Activated CD4-positive, alpha-beta memory T cell treated with anti-CD3 and anti-CD28 coated beads, Interleukin-2, amount 10 ng/mL, durations not matched to agents 7 days and 5 days (primary cell): ENCODE measurements at regions of chr4 and their contacts with region 1.

Region 1: DNA sequence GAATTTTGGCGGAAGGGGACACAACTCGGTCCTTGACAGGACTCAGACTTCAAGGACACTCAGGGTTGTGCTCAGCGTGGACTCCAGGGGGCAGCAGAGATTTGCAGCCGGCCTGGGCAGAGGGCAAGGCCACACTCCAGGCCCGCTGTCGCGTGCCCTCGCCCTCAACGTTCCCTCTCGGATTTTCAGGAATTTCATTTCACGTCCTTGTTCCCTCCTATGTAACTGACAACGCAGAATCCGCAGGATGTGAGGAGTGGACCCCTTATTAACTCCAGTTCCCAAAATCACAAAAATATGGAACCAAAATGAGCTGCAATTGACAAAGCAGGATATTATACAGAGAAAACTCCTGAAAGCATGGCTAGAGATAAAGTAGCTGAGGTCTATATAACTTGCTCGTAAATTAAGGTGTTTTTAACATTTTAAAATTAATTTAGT is 21.0 kb upstream of the DCTD start:
- DNase-seq: peak; percentile 67
- H3K4me3 Mint-ChIP-seq: no peak overlapping the region
- H3K27ac Mint-ChIP-seq: no peak overlapping the region
- H3K4me1 Mint-ChIP-seq: no peaks in the 10 kb centered on the region
- H3K27me3 Mint-ChIP-seq: peaks cover 10% of the 10 kb centered on the region

Region 2: DNA sequence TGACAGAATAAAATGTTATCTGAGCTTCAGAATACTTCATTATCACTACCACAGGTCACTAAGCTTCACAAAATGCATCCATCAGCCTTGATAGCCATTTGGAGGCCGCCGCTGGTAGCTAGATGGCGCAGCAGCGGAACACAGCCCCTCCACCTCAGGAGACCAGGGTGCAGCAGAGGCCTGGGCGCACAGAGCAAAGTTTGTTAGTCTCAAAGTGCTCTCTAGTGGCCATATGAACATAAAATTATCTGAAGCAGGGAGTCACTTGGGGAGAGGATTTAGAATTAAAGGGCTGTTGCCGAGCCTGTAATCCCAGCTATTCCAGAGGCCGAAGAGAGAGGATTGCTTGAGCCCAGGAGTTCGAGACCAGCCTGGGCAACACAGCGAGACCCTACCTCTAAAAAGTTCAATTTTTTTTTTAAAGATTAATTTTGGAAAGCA is 12.9 kb before region 1 on chr4:
- CTCF ChIA-PET with region 1: interaction called, 12 read pairs
- POLR2A ChIA-PET with region 1: no interaction called
- DNase-seq: peak; percentile 59
- H3K4me3 Mint-ChIP-seq: no peak overlapping the region
- H3K27ac Mint-ChIP-seq: no peak overlapping the region
- H3K4me1 Mint-ChIP-seq: no peaks in the 10 kb centered on the region
- H3K27me3 Mint-ChIP-seq: peaks cover 14% of the 10 kb centered on the region

Region 3: GRCh38 chr4:182960746-182961145 is 22.5 kb after region 1 on chr4:
- CTCF ChIA-PET with region 1: no interaction called
- POLR2A ChIA-PET with region 1: no interaction called
- DNase-seq: no peak
- H3K4me3 Mint-ChIP-seq: no peak overlapping the region
- H3K27ac Mint-ChIP-seq: no peak overlapping the region
- H3K4me1 Mint-ChIP-seq: no peaks in the 10 kb centered on the region
- H3K27me3 Mint-ChIP-seq: peaks cover 4% of the 10 kb centered on the region

Region 4: GRCh38 chr4:183074296-183074990 is 136.2 kb after region 1 on chr4:
- CTCF ChIA-PET with region 1: interaction called, 13 read pairs
- POLR2A ChIA-PET with region 1: no interaction called
- DNase-seq: no peak
- H3K4me3 Mint-ChIP-seq: no peak overlapping the region
- H3K27ac Mint-ChIP-seq: no peak overlapping the region
- H3K4me1 Mint-ChIP-seq: no peaks in the 10 kb centered on the region
- H3K27me3 Mint-ChIP-seq: peaks cover 15% of the 10 kb centered on the region

Region 5: DNA sequence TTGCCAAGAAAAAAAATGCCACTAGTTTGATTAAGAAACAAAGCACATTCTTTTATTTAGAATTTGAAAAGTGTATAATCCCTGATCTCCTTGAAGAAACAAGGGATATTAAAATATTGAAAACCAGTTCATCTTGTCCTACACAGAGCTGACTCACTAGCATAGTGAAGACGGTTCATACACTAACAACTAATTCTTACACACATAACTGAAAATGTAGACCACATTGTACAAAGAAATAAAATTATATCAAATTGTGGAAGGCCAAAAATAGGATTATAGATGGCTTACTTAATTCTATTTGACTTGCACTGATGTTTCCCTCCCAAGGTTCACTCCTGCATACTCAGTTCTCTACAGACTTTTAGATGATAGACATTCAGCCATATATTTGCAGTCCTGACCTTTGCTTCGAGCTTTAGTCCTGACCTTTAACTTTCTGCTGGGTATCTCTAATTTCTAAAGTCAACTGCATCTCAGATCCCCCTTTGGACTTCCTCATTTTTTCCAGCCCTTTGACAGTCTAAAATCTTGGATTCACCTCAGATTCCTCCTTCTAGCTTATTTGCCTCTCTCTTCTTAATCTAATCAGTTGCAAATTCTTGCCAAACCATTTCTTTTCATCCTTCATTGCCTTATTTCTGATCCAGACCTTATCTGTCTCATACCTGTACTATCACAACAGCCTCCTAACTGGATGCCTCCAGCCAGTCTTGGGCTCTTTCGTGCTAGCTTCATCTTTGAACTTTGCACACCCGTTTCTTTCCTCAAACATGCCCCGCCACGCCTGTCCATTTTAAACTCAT is 156.4 kb after region 1 on chr4:
- CTCF ChIA-PET with region 1: no interaction called
- POLR2A ChIA-PET with region 1: no interaction called
- DNase-seq: no peak
- H3K4me3 Mint-ChIP-seq: no peak overlapping the region
- H3K27ac Mint-ChIP-seq: no peak overlapping the region
- H3K4me1 Mint-ChIP-seq: peaks cover 2% of the 10 kb centered on the region
- H3K27me3 Mint-ChIP-seq: peaks cover 36% of the 10 kb centered on the region

Region 6: DNA sequence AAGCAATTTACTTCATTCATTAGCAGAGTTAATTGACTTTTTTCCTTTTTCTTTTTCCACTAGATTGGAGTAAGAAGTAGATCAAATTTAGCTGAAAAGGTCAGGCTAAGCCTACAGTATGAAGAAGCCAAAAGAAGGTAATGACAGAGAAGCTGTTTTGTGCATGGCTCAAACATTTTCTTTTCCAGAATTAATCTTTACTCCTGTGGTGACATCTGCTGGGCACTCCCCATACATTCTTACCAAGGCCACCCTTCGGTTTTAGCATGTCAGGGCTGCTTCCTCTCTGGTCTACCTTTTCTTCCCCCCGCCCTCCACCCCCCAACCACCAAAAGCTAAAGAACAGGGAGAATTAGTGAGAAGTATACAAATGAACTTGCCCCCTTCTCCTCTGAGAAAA is 311.6 kb after region 1 on chr4:
- CTCF ChIA-PET with region 1: interaction called, 33 read pairs
- POLR2A ChIA-PET with region 1: no interaction called
- DNase-seq: no peak
- H3K4me3 Mint-ChIP-seq: no peak overlapping the region
- H3K27ac Mint-ChIP-seq: no peak overlapping the region
- H3K4me1 Mint-ChIP-seq: no peaks in the 10 kb centered on the region
- H3K27me3 Mint-ChIP-seq: no peaks in the 10 kb centered on the region

Region 7: GRCh38 chr4:183256756-183257385 is 318.6 kb after region 1 on chr4:
- CTCF ChIA-PET with region 1: interaction called, 51 read pairs
- POLR2A ChIA-PET with region 1: no interaction called
- DNase-seq: peak; percentile 32
- H3K4me3 Mint-ChIP-seq: no peak overlapping the region
- H3K27ac Mint-ChIP-seq: no peak overlapping the region
- H3K4me1 Mint-ChIP-seq: no peaks in the 10 kb centered on the region
- H3K27me3 Mint-ChIP-seq: peaks cover 2% of the 10 kb centered on the region

Region 8: DNA sequence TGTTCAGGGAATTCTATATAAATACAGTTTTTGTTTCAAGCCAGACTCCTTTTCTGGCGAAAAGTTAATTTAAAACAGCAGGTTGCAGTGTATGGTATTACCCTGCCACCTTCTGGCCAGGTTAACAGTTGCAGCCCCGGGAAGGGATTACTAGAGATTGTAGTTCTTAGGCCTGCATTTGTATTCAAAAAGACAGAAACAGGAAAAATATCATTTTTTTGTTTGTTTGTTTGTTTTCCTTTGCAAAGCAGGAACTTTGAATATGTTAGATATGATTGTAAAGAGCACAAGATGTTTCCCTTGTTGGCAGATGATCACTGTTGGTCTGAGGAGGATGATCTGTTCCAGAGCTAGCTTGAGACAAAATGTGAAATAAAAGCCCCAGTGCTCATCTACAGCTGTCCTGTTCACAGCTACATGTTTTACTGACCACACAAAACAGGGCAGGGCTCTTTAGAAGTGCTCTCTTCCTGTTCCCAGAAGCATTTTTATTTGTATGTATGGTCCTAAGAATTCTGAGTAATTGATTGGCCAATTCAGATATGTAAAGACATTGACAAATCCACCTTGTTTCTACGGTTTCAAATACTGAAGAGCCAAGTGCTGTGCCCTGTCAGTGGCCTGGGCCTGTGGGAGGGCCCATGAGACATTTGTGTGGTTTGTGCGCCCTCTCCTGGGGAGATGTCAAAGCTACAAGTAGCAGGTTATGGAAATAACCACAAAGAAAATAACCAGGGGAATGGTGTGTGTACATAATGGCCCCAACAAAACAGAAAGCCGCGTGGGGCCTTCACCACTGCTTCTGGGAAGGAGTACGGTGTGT is 323.9 kb after region 1 on chr4:
- CTCF ChIA-PET with region 1: interaction called, 51 read pairs
- POLR2A ChIA-PET with region 1: no interaction called
- DNase-seq: peak; percentile 80
- H3K4me3 Mint-ChIP-seq: no peak overlapping the region
- H3K27ac Mint-ChIP-seq: peak overlapping the region; percentile 48
- H3K4me1 Mint-ChIP-seq: peaks cover 6% of the 10 kb centered on the region
- H3K27me3 Mint-ChIP-seq: peaks cover 2% of the 10 kb centered on the region